Thyroid gland (tissue), 4 donors: ENCODE measurements at regions of chrX and their contacts with region 1.

Region 1: GRCh38 chrX:70039756-70040155 is 10.0 kb downstream of the AWAT2 start:
- DNase-seq: no peak
- H3K4me3 ChIP-seq: no peak overlapping the region
- H3K27ac ChIP-seq: no peak overlapping the region
- H3K4me1 ChIP-seq: no peaks in the 10 kb centered on the region
- H3K27me3 ChIP-seq: no peaks in the 10 kb centered on the region
- CTCF ChIP-seq: no peak
- POLR2A ChIP-seq: no peak

Region 2: GRCh38 chrX:69543572-69543971 is 496.2 kb before region 1 on chrX:
- intact Hi-C with region 1: loop called (anchors 5 kb)
- DNase-seq: no peak
- H3K4me3 ChIP-seq: no peak overlapping the region
- H3K27ac ChIP-seq: no peak overlapping the region
- H3K4me1 ChIP-seq: peaks cover 0 to 24% of the 10 kb centered on the region in 2 donors
- H3K27me3 ChIP-seq: no peaks in the 10 kb centered on the region
- CTCF ChIP-seq: no peak
- POLR2A ChIP-seq: no peak